ENCODE measurements at regions of chr17 and their contacts with region 1.

Region 1: DNA sequence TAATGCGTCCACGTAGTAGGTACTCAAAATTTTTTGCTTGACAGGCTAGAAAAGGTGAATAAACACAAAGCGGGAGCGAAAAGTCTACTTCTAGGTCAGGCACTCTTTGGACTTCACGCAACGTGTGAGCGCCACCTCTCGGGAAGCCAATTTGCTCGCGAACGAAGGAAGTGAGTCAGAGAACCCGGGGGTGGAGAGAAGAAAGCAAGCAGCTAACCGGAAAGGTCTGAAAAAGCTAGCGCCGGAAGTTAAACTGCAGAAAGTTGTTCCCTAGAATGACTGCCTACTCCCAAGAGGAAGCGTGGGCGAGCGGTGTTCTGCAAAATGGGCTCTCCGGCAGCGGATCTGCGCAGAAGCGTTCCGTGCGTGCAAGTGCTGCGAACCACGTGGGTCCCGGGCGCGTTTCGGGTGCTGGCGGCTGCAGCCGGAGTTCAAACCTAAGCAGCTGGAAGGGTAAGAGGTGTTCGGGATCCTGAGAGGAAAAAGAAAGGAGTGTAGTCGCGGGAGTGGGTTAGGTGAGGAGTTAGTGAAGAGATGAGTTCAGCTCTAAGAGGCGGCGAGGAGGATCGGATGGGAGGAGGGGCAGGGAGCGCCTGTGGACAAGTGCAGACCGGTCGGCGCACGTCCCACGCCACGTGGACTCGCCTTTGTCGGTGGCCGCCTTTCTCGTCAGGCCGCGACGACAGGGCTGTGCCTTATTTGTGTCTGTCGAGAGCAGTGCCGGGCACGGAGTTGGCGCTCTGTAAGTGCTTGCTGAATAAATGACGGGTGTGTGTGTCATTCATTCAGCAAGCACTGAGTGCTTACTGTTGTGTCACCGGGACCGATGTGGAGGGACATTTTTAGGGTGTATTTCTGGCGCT is at the start of gene NME1:
- DNase-seq: peak; percentile 94 to 99 (median 96)
- ATAC-seq: peak; percentile 92
- H3K4me3 ChIP-seq: peak within 1 kb of the TSS; percentile 70 to 75
- H3K4me3 Mint-ChIP-seq: no peak within 1 kb of the TSS
- H3K27ac ChIP-seq: peak within 1 kb of the TSS; percentile 58 to 77
- H3K27ac Mint-ChIP-seq: no peak within 1 kb of the TSS
- H3K4me1 ChIP-seq: peaks cover 22% of the 10 kb centered on the region
- H3K4me1 Mint-ChIP-seq: peaks cover 11% of the 10 kb centered on the region
- H3K27me3 ChIP-seq: no peaks in the 10 kb centered on the region
- H3K27me3 Mint-ChIP-seq: no peaks in the 10 kb centered on the region
- CTCF ChIP-seq: peak; percentile 67
- total RNA-seq, gene NME1: 11.3 to 12.1 TPM

Region 2: DNA sequence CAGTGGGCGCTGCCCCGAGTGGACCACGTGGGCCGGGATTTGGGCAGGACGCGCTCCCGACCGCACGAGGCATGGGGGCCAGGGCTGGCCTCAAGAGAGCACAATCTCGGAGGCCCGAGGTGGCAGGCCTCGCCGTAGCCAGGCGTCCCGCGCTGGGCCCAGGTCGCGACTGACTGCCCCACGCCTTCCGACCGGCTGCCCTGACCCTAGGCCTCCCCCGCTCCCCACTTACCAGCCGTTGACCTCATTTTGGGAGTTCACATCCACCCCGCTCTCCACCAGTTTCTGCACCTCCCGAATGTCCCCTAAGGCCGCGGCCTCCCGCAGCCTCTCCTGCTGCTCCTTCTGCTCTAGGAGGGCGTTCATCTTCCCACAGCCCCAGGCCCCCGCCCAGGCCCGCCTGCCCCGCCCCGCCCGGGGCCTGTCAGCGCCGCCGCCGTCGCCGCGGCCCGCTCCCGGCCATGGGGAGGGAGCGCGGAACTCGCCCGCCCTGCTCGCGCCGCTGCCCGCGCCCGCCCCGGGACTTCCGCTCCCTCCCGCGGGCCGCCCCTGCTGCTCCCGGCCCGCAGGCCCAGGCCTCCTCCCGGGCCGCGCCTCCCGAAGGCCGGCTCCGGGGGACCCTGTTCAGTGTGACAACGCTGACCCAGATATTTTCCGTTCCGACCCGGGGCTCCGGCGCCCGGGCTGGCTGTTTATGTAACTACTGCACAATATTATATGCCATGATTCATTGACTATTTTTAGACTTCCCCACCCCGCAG is 446.0 kb before region 1 on chr17 and contains the start of gene ANKRD40:
- CTCF ChIA-PET with region 1: no interaction called
- POLR2A ChIA-PET with region 1: no interaction called
- intact Hi-C with region 1: loop called in 1 of 2 experiments (anchors 1 kb)
- DNase-seq: peak; percentile 80 to 94 (median 90)
- ATAC-seq: peak; percentile 78
- H3K4me3 ChIP-seq: peak within 1 kb of the TSS; percentile 52 to 76
- H3K4me3 Mint-ChIP-seq: peak within 1 kb of the TSS; percentile 89
- H3K27ac ChIP-seq: peak within 1 kb of the TSS; percentile 77 to 96
- H3K27ac Mint-ChIP-seq: peak within 1 kb of the TSS; percentile 93
- H3K4me1 ChIP-seq: peaks cover 15% of the 10 kb centered on the region
- H3K4me1 Mint-ChIP-seq: peaks cover 52% of the 10 kb centered on the region
- H3K27me3 ChIP-seq: no peaks in the 10 kb centered on the region
- H3K27me3 Mint-ChIP-seq: no peaks in the 10 kb centered on the region
- CTCF ChIP-seq: no peak
- total RNA-seq, gene ANKRD40: 23.1 to 24.7 TPM

Region 3: DNA sequence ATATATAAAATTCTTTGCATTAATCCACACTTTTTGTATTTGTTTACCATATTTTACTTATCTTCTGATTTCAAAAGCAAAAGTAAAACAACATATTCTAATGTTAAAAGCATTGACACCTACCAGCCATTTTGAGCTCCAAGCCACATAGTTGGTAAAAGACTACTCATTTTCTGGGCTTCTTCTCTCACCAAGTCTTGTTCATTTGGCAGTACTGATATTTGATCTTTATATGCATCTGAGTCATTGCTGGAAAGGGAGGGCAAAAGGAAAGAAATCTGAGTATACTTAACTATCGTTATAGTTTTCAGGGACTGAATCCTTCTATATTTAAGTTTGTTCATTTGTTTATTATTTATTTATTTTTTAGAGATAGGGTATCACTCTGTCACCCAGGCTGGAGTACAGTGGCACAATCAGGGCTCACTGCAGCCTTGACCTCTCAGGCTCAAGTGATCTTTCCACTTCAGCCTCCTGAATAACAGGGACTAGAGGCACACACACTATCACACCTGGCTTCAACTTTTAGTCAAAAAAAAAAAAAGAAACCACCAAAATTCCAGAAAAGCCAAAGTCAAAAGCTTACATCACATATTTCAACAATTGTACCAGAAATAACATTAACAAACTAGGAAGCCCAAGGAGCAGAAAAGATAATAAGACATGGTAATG is 166.3 kb before region 1 on chr17:
- CTCF ChIA-PET with region 1: interaction called, 12 read pairs
- POLR2A ChIA-PET with region 1: no interaction called
- intact Hi-C with region 1: no loop called
- DNase-seq: no peak
- ATAC-seq: no peak
- H3K4me3 ChIP-seq: no peak overlapping the region
- H3K4me3 Mint-ChIP-seq: no peak overlapping the region
- H3K27ac ChIP-seq: no peak overlapping the region
- H3K27ac Mint-ChIP-seq: no peak overlapping the region
- H3K4me1 ChIP-seq: no peaks in the 10 kb centered on the region
- H3K4me1 Mint-ChIP-seq: no peaks in the 10 kb centered on the region
- H3K27me3 ChIP-seq: no peaks in the 10 kb centered on the region
- H3K27me3 Mint-ChIP-seq: no peaks in the 10 kb centered on the region
- CTCF ChIP-seq: no peak

Region 4: DNA sequence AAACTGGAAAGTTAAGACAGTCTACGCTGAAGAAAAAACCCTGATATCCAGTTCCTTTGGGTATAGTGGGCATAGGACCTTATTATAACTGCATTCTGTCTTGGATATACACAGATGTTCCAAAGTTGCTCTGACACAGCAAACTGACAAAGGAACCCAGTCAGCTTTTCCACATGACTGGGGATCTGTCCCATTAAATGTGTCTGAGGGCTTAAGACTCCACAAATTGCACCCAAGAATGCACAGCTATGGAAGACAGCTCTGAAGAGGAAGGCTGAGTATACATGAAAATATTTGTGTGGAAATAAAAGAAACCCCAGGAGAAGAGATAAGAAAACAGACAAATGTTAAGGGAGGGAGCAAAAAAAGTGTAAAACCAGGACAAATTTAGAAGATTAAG is 146.8 kb before region 1 on chr17:
- CTCF ChIA-PET with region 1: interaction called, 124 read pairs
- POLR2A ChIA-PET with region 1: interaction called, 9 read pairs
- intact Hi-C with region 1: loop called (anchors 1 kb)
- DNase-seq: no peak
- ATAC-seq: no peak
- H3K4me3 ChIP-seq: no peak overlapping the region
- H3K4me3 Mint-ChIP-seq: no peak overlapping the region
- H3K27ac ChIP-seq: no peak overlapping the region
- H3K27ac Mint-ChIP-seq: no peak overlapping the region
- H3K4me1 ChIP-seq: no peaks in the 10 kb centered on the region
- H3K4me1 Mint-ChIP-seq: no peaks in the 10 kb centered on the region
- H3K27me3 ChIP-seq: no peaks in the 10 kb centered on the region
- H3K27me3 Mint-ChIP-seq: no peaks in the 10 kb centered on the region
- CTCF ChIP-seq: no peak

Region 5: GRCh38 chr17:51120739-51121617 is 32.5 kb before region 1 on chr17 and contains the start of gene SPAG9:
- CTCF ChIA-PET with region 1: interaction called, 14 read pairs
- POLR2A ChIA-PET with region 1: interaction called, 17 read pairs
- intact Hi-C with region 1: loop called (anchors 1 kb)
- DNase-seq: peak; percentile 79 to 96 (median 88)
- ATAC-seq: peak; percentile 84
- H3K4me3 ChIP-seq: peak within 1 kb of the TSS; percentile 96
- H3K4me3 Mint-ChIP-seq: peak within 1 kb of the TSS; percentile 94
- H3K27ac ChIP-seq: peak within 1 kb of the TSS; percentile 95
- H3K27ac Mint-ChIP-seq: peak within 1 kb of the TSS; percentile 98
- H3K4me1 ChIP-seq: peaks cover 38% of the 10 kb centered on the region
- H3K4me1 Mint-ChIP-seq: peaks cover 49% of the 10 kb centered on the region
- H3K27me3 ChIP-seq: no peaks in the 10 kb centered on the region
- H3K27me3 Mint-ChIP-seq: no peaks in the 10 kb centered on the region
- CTCF ChIP-seq: no peak
- total RNA-seq, gene SPAG9: 75.7 to 77.6 TPM

Region 6: DNA sequence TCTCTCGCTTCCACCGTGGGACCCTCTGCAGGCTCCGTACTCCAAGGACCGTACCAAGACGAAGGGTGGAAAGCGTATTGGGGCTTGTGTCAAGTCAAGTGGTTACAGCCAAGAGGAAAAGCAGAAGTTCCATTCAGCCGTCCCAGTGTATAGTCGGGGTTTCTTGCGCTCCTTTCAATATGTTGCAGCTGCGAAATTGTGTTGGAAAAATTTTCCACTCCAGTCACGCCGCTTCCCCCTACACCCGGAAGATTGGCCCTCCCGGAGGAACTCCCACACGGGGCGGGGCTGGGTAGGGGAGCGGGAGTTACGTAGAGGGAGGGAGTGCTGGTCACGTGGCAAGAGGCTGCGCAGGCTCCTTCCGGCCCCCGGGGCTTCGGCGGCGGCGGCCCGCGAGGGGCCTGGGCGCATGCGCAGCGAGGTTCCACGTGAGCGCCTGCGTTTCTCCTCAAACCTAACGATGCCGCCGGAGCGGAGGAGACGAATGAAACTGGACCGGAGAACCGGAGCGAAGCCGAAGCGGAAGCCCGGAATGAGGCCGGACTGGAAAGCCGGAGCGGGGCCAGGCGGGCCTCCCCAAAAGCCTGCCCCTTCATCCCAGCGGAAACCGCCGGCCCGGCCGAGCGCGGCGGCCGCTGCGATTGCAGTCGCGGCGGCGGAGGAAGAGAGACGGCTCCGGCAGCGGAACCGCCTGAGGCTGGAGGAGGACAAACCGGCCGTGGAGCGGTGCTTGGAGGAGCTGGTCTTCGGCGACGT is 106.9 kb after region 1 on chr17 and contains the start of gene UTP18:
- CTCF ChIA-PET with region 1: no interaction called
- POLR2A ChIA-PET with region 1: interaction called, 9 read pairs
- intact Hi-C with region 1: loop called (anchors 1 kb)
- DNase-seq: peak; percentile 91 to 99 (median 97)
- ATAC-seq: peak; percentile 87
- H3K4me3 ChIP-seq: peak within 1 kb of the TSS; percentile 76 to 87
- H3K4me3 Mint-ChIP-seq: peak within 1 kb of the TSS; percentile 97
- H3K27ac ChIP-seq: peak within 1 kb of the TSS; percentile 97 to 98
- H3K27ac Mint-ChIP-seq: peak within 1 kb of the TSS; percentile 98
- H3K4me1 ChIP-seq: peaks cover 46% of the 10 kb centered on the region
- H3K4me1 Mint-ChIP-seq: peaks cover 67% of the 10 kb centered on the region
- H3K27me3 ChIP-seq: no peaks in the 10 kb centered on the region
- H3K27me3 Mint-ChIP-seq: no peaks in the 10 kb centered on the region
- CTCF ChIP-seq: no peak
- total RNA-seq, gene UTP18: 53.5 to 59.8 TPM

Region 7: DNA sequence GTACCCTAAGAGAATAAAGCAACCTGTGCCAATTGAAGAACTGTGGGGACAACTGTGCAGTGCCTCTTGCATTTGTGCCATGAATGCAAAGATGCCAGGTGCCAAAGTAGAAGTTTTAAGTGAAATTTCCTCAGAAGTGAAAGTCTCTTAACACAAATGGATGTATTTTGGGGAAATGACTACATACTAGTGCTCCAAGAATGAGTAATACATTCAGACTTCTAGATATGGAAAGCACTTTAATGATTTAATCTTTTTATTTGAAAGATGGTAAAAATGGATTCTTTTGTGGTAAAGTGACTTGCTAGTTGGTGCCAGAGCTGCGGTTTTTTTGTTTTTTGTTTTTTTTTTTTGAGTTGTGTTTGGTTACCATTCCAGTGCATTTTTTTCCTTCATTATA is 121.9 kb after region 1 on chr17:
- CTCF ChIA-PET with region 1: no interaction called
- POLR2A ChIA-PET with region 1: no interaction called
- intact Hi-C with region 1: no loop called
- DNase-seq: no peak
- ATAC-seq: no peak
- H3K4me3 ChIP-seq: no peak overlapping the region
- H3K4me3 Mint-ChIP-seq: no peak overlapping the region
- H3K27ac ChIP-seq: no peak overlapping the region
- H3K27ac Mint-ChIP-seq: no peak overlapping the region
- H3K4me1 ChIP-seq: no peaks in the 10 kb centered on the region
- H3K4me1 Mint-ChIP-seq: peaks cover 29% of the 10 kb centered on the region
- H3K27me3 ChIP-seq: no peaks in the 10 kb centered on the region
- H3K27me3 Mint-ChIP-seq: no peaks in the 10 kb centered on the region
- CTCF ChIP-seq: no peak

Measured in CD8-positive, alpha-beta T cell (primary cell).